ENCODE measurements at regions of chr9 and their contacts with region 1.

Region 1: GRCh38 chr9:21465859-21466518 is 16.1 kb downstream of the IFNE start:
- DNase-seq: peak in 1 of 2 experiments; percentile 56
- H3K4me3 ChIP-seq: no peak overlapping the region
- H3K4me3 Mint-ChIP-seq: no peak overlapping the region
- H3K27ac Mint-ChIP-seq: no peak overlapping the region
- H3K4me1 ChIP-seq: no peaks in the 10 kb centered on the region
- H3K4me1 Mint-ChIP-seq: no peaks in the 10 kb centered on the region
- H3K27me3 ChIP-seq: no peaks in the 10 kb centered on the region
- H3K27me3 Mint-ChIP-seq: no peaks in the 10 kb centered on the region
- CTCF ChIP-seq: peak; percentile 49 to 54

Region 2: DNA sequence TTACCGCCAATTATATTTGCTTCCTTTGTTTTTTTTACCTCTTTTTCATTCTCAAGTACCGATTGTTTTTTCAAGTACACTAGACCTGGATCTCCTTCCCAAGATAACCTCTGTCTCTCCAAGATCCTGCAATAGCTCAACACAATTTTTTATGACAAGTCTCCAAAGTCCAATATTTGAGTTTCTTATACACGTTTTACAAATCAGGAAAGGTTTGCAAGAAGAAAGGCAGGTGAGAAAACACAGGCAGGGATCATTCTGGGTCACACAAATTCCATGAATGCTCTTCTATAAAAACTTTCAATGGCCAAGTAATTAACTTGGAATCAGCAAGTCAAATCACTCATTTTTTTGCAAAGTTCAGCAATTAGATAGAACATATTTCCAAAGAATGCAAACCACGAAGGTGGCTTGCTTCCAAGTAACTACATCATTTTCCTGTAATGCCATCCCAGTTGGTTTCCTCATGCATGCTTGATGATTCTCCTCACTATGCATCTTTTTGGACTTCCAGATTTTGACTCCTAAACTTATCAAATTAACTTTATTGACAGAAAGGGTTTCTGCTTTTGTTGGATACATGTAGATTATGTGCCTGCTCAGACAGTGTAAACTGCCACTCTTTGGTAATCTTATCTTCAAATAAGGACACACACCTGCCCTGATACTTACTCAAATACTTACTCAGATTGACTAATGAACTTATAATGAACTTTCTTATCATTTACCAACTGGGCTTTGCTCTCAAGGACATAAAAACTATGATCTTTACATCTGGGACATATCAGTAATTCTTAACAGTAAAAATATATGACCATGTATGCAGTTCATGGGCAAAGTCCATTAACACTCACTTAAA is 40.9 kb after region 1 on chr9:
- CTCF ChIA-PET with region 1: no interaction called
- POLR2A ChIA-PET with region 1: no interaction called
- intact Hi-C with region 1: loop called (anchors 2 kb)
- DNase-seq: peak; percentile 35 to 39
- H3K4me3 ChIP-seq: no peak overlapping the region
- H3K4me3 Mint-ChIP-seq: peak overlapping the region; percentile 44
- H3K27ac Mint-ChIP-seq: no peak overlapping the region
- H3K4me1 ChIP-seq: peaks cover 50% of the 10 kb centered on the region
- H3K4me1 Mint-ChIP-seq: peaks cover 25% of the 10 kb centered on the region
- H3K27me3 ChIP-seq: no peaks in the 10 kb centered on the region
- H3K27me3 Mint-ChIP-seq: no peaks in the 10 kb centered on the region
- CTCF ChIP-seq: no peak

Region 3: GRCh38 chr9:21527579-21527978 is 61.6 kb after region 1 on chr9:
- CTCF ChIA-PET with region 1: no interaction called
- POLR2A ChIA-PET with region 1: no interaction called
- intact Hi-C with region 1: no loop called
- DNase-seq: no peak
- H3K4me3 ChIP-seq: no peak overlapping the region
- H3K4me3 Mint-ChIP-seq: no peak overlapping the region
- H3K27ac Mint-ChIP-seq: no peak overlapping the region
- H3K4me1 ChIP-seq: no peaks in the 10 kb centered on the region
- H3K4me1 Mint-ChIP-seq: no peaks in the 10 kb centered on the region
- H3K27me3 ChIP-seq: no peaks in the 10 kb centered on the region
- H3K27me3 Mint-ChIP-seq: no peaks in the 10 kb centered on the region
- CTCF ChIP-seq: no peak

Region 4: GRCh38 chr9:21709464-21710058 is 243.6 kb after region 1 on chr9:
- CTCF ChIA-PET with region 1: no interaction called
- POLR2A ChIA-PET with region 1: no interaction called
- intact Hi-C with region 1: loop called (anchors 5 kb)
- DNase-seq: peak; percentile 49 to 57
- H3K4me3 ChIP-seq: no peak overlapping the region
- H3K4me3 Mint-ChIP-seq: no peak overlapping the region
- H3K27ac Mint-ChIP-seq: no peak overlapping the region
- H3K4me1 ChIP-seq: no peaks in the 10 kb centered on the region
- H3K4me1 Mint-ChIP-seq: no peaks in the 10 kb centered on the region
- H3K27me3 ChIP-seq: no peaks in the 10 kb centered on the region
- H3K27me3 Mint-ChIP-seq: no peaks in the 10 kb centered on the region
- CTCF ChIP-seq: peak; percentile 40 to 70